Gastrocnemius medialis (tissue), 4 donors: ENCODE measurements at regions of chr17 and their contacts with region 1.

Region 1: GRCh38 chr17:28854457-28855350 is at the start of gene ERAL1:
- DNase-seq: peak; percentile 81 to 82
- ATAC-seq: peak; percentile 99
- H3K4me3 ChIP-seq: peak within 1 kb of the TSS; percentile 63 to 85 (median 75)
- H3K27ac ChIP-seq: peak within 1 kb of the TSS; percentile 77 to 85 (median 82)
- H3K4me1 ChIP-seq: peaks cover 7 to 11% of the 10 kb centered on the region in 2 donors
- H3K27me3 ChIP-seq: no peaks in the 10 kb centered on the region
- CTCF ChIP-seq: peak in 1 of 5 experiments; percentile 18
- POLR2A ChIP-seq: peak; percentile 60 to 75
- total RNA-seq, gene ERAL1: 35.1 to 69.2 (median 64.1) TPM

Region 2: DNA sequence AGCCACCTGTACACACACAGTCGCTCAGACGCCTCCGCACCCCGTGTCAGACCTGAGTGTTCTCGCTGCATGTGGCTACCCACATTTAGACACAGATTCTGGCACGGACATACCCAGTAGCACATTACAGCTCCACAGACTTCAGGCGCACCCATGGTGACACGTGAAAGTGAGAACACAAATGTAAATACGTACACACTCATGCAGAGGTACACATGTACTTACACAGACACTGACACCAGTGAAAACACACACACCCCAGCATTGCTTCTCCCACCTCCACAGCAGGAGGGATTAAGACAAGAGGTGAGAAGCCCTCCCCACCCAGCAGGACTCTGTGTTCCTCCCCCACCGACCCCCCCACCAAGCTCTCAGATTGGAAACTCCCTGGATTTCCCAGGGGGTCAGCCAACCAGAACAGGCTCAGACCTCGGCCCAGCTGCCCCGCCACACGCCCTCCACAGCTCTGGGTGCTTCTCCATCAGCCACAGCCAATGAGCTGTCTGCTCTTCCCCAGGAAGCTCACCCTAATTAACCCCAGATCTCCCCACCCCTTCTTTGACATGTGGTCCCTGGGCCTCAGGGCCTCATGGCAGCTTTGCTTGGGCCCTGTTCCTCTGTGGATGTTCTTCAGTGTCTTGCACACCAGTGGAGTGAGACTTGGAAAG is 353.9 kb before region 1 on chr17:
- in situ Hi-C with region 1: no loop called
- intact Hi-C with region 1: no loop called
- DNase-seq: no peak
- ATAC-seq: no peak
- H3K4me3 ChIP-seq: no peak overlapping the region
- H3K27ac ChIP-seq: no peak overlapping the region
- H3K4me1 ChIP-seq: no peaks in the 10 kb centered on the region
- H3K27me3 ChIP-seq: no peaks in the 10 kb centered on the region
- CTCF ChIP-seq: no peak
- POLR2A ChIP-seq: no peak

Region 3: GRCh38 chr17:28750178-28751047 is 104.3 kb before region 1 on chr17:
- in situ Hi-C with region 1: loop called in 1 of 4 experiments (anchors 25 kb)
- intact Hi-C with region 1: no loop called
- DNase-seq: peak; percentile 84 to 90
- ATAC-seq: peak; percentile 81 to 93
- H3K4me3 ChIP-seq: no peak overlapping the region
- H3K27ac ChIP-seq: no peak overlapping the region
- H3K4me1 ChIP-seq: peaks cover 7 to 20% of the 10 kb centered on the region in 2 donors
- H3K27me3 ChIP-seq: no peaks in the 10 kb centered on the region
- CTCF ChIP-seq: peak; percentile 93 to 100 (median 98)
- POLR2A ChIP-seq: no peak

Region 4: DNA sequence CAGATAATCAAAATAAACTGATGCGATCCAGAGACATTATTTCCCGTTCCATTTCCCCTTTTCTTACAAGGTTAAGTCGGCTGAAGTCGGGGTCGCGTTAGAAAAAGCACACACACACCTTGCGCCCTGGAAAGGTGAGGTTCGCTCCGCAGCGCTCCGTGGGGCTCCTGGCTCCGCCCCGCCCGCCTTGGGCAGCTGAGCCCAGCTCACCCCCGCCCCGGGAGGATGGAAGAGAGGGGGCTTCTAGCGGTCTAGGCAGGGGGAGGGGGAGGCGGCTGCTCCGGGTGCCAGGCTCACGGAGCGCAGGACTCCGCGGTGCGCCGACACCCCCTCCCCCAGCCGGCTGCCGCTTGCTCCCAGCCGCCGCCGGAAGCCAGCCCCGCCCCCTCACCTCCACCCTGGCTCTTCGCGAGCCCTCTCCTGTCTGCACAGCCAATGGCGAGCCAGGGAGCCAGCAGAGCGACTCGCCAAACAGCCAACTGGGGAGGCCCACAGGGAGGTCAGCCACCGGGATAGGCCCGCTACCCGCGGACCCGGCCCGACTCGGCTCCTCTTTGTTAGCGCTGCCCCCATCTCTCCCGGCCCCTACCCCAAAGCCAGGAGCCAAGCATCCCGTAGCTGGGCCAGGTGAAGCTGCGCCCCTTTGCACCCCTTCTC is 42.5 kb before region 1 on chr17:
- in situ Hi-C with region 1: no loop called
- intact Hi-C with region 1: loop called (anchors 2 kb)
- DNase-seq: peak; percentile 98
- ATAC-seq: peak; percentile 84 to 87
- H3K4me3 ChIP-seq: peak overlapping the region; percentile 79 to 95 (median 89)
- H3K27ac ChIP-seq: peak overlapping the region; percentile 93 to 94 (median 94)
- H3K4me1 ChIP-seq: peaks cover 37 to 44% of the 10 kb centered on the region in 2 donors
- H3K27me3 ChIP-seq: no peaks in the 10 kb centered on the region
- CTCF ChIP-seq: no peak
- POLR2A ChIP-seq: peak; percentile 81 to 85

Region 5: DNA sequence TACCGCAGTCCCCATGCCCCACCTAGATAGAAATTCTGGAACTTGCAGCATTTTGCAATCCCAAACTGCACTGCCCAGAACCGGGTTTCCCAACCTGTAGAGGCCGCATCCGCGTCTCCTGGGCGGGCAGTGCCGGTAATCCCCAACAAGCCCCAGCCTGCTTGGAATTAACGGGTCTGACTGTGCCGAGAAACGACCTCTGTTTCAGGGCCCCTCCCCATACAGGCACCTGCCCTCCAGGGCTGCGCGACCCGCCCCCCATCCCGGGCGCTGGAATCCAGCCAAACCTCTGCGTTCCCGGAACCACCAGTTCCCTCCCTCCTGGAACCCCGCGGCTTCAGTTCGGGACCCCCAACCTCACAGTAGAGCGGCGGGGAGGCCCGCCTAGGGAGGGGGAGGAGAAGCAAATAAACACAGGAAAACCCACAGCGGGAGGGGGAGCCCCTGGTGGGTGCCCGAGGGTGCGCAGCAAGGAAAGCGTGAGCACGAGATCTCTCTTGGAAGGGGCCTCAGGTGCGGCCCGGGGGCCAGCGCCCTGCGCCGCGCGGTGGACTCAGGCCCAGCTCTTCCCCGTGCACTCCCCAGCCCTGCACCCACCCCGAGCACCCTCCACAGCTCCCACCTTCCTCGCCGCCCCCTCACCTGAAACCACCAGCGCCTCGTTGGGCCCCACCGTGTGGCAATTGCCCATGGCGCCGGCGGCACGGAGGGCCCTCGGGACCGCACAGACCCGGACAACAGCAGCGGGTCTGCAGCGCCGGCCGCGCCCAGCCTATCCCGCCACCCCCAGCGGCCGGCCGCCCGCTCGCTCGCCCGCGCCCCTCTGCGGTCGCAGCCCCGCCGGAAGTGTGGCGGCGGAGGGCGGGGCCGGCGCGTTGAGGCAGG is 42.4 kb after region 1 on chr17 and contains the start of gene FLOT2:
- in situ Hi-C with region 1: no loop called
- intact Hi-C with region 1: loop called (anchors 5 kb)
- DNase-seq: peak; percentile 29 to 53
- ATAC-seq: peak; percentile 63 to 70
- H3K4me3 ChIP-seq: peak within 1 kb of the TSS; percentile 70 to 92 (median 84)
- H3K27ac ChIP-seq: peak within 1 kb of the TSS; percentile 82 to 89 (median 85)
- H3K4me1 ChIP-seq: peaks cover 23 to 26% of the 10 kb centered on the region in 2 donors
- H3K27me3 ChIP-seq: no peaks in the 10 kb centered on the region
- CTCF ChIP-seq: peak; percentile 19 to 51 (median 37)
- POLR2A ChIP-seq: peak; percentile 17 to 43
- total RNA-seq, gene FLOT2: 15.3 to 37.9 (median 28.4) TPM